K562 (cell line): ENCODE measurements at regions of chr6 and their contacts with region 1.

Region 1: GRCh38 chr6:27157459-27158315 is 89.8 kb upstream of the PRSS16 start:
- DNase-seq: peak; percentile 63 to 93 (median 70)
- ATAC-seq: peak; percentile 87
- H3K4me3 ChIP-seq: peak overlapping the region; percentile 54
- H3K27ac ChIP-seq: peak overlapping the region; percentile 46
- H3K4me1 ChIP-seq: peaks cover 10% of the 10 kb centered on the region in 2 experiments; a peak in 3 of 5 replicates
- H3K27me3 ChIP-seq: no peaks in the 10 kb centered on the region
- CTCF ChIP-seq: peak; percentile 73 to 77 (median 75)
- EP300 ChIP-seq: peak; percentile 49
- POLR2A ChIP-seq: 0 out of 2 replicates have a peak, but pooled peaks have one; percentile 12
- RAD21 ChIP-seq: peak; percentile 71 to 76

Region 2: GRCh38 chr6:26607434-26608230 is 550.1 kb before region 1 on chr6:
- CTCF ChIA-PET with region 1: interaction called, 3 read pairs
- POLR2A ChIA-PET with region 1: no interaction called
- in situ Hi-C with region 1: no loop called
- intact Hi-C with region 1: loop called (anchors 1 kb)
- DNase-seq: peak; percentile 56 to 81 (median 70)
- ATAC-seq: peak; percentile 96
- H3K4me3 ChIP-seq: no peak overlapping the region
- H3K27ac ChIP-seq: no peak overlapping the region
- H3K4me1 ChIP-seq: peaks cover 0 to 10% of the 10 kb centered on the region in 2 experiments; a peak in 3 of 5 replicates
- H3K27me3 ChIP-seq: no peaks in the 10 kb centered on the region
- CTCF ChIP-seq: peak; percentile 83 to 93 (median 92)
- EP300 ChIP-seq: no peak
- POLR2A ChIP-seq: no peak
- RAD21 ChIP-seq: peak; percentile 96

Region 3: GRCh38 chr6:27138837-27139755 is 18.6 kb before region 1 on chr6:
- CTCF ChIA-PET with region 1: no interaction called
- POLR2A ChIA-PET with region 1: interaction called, 19 read pairs
- in situ Hi-C with region 1: no loop called
- intact Hi-C with region 1: no loop called
- DNase-seq: peak; percentile 48 to 95 (median 65)
- ATAC-seq: peak; percentile 48
- H3K4me3 ChIP-seq: peak overlapping the region; percentile 48
- H3K27ac ChIP-seq: peak overlapping the region; percentile 88
- H3K4me1 ChIP-seq: peaks cover 7 to 17% of the 10 kb centered on the region in 2 experiments
- H3K27me3 ChIP-seq: no peaks in the 10 kb centered on the region
- CTCF ChIP-seq: no peak; a peak in 1 of 6 replicates
- EP300 ChIP-seq: peak; percentile 91
- POLR2A ChIP-seq: peak; percentile 98
- RAD21 ChIP-seq: peak in 1 of 2 experiments; percentile 16; a peak in 2 of 4 replicates

Region 4: GRCh38 chr6:27188885-27189418 is 31.3 kb after region 1 on chr6:
- CTCF ChIA-PET with region 1: interaction called, 8 read pairs
- POLR2A ChIA-PET with region 1: no interaction called
- in situ Hi-C with region 1: no loop called
- intact Hi-C with region 1: loop called (anchors 1 kb)
- DNase-seq: peak; percentile 69 to 93 (median 78)
- ATAC-seq: peak; percentile 85
- H3K4me3 ChIP-seq: peak overlapping the region; percentile 56
- H3K27ac ChIP-seq: peak overlapping the region; percentile 80
- H3K4me1 ChIP-seq: peaks cover 8% of the 10 kb centered on the region in 2 experiments; a peak in 4 of 5 replicates
- H3K27me3 ChIP-seq: no peaks in the 10 kb centered on the region
- CTCF ChIP-seq: peak; percentile 78 to 92 (median 85)
- EP300 ChIP-seq: no peak; the same call in 1 of the 2 replicates
- POLR2A ChIP-seq: no peak
- RAD21 ChIP-seq: peak; percentile 93 to 95

Region 5: DNA sequence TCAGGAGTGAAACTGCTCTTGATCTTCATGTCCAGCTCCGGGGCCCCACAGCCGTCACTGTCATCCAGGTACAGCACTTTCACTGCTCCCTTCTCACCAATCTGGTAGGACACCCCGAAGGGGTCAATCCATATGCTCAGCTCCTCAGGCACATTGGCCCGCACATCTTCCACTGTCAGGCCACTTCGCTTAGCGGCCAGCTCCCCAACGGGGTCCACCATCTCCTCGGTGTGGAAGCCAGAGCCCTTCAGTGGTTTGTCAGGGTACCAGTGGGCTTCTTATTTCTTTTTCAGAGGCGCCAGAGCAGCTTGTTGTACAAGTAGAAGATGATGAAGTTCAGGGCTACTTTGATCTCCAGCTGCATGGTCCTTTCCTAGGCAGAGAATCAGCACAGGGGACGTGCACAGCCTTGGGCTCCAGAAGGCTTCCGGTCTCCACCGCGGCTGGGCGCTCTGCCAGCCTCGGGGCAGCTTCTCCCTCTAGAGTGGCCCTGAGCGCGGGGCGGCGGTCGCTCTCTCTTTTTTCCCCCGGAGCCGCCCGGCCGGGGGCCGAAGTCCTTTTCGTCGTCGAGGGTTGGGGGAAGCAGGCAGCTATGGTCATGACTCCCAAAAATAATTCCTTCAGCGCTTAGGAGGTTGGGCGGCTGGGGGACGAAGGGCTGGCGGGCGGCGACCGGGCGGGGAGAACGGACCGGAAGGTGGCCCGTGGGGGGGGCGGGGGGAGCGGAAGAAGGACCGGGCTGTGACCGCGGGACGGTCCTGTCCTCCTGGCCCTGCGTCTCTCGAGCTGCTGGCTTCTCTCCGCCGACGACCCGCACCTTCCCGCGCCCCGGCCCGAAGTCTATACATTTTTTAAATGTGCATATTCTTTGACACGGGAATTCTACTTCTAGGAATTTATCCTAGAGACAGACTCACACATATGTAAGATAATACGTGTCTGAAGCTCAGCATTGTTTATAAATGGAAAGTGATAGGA is 1060.9 kb after region 1 on chr6:
- CTCF ChIA-PET with region 1: no interaction called
- POLR2A ChIA-PET with region 1: no interaction called
- in situ Hi-C with region 1: no loop called
- intact Hi-C with region 1: loop called (anchors 10 kb)
- DNase-seq: peak; percentile 89 to 95 (median 92)
- ATAC-seq: peak; percentile 84
- H3K4me3 ChIP-seq: peak overlapping the region; percentile 62
- H3K27ac ChIP-seq: peak overlapping the region; percentile 81
- H3K4me1 ChIP-seq: peaks cover 33 to 44% of the 10 kb centered on the region in 2 experiments
- H3K27me3 ChIP-seq: no peaks in the 10 kb centered on the region
- CTCF ChIP-seq: peak in 2 of 3 experiments; percentile 13 to 32; a peak in 1 of 6 replicates
- EP300 ChIP-seq: peak; percentile 36; the same call in 1 of the 2 replicates
- POLR2A ChIP-seq: peak; percentile 82
- RAD21 ChIP-seq: no peak; a peak in 1 of 4 replicates